Dendritic cell treated with granulocyte-macrophage colony-stimulating factor and Interleukin-4, amounts not matched to agents 40 ng/mL and 50 ng/mL, for 4 days (primary cell): ENCODE measurements at regions of chr4 and their contacts with region 1.

Region 1: GRCh38 chr4:145609481-145610427 is 9.4 kb upstream of the MMAA start:
- H3K4me3 Mint-ChIP-seq: no peak overlapping the region
- H3K27ac Mint-ChIP-seq: no peak overlapping the region
- H3K4me1 Mint-ChIP-seq: peaks cover 32% of the 10 kb centered on the region
- H3K27me3 Mint-ChIP-seq: no peaks in the 10 kb centered on the region

Region 2: DNA sequence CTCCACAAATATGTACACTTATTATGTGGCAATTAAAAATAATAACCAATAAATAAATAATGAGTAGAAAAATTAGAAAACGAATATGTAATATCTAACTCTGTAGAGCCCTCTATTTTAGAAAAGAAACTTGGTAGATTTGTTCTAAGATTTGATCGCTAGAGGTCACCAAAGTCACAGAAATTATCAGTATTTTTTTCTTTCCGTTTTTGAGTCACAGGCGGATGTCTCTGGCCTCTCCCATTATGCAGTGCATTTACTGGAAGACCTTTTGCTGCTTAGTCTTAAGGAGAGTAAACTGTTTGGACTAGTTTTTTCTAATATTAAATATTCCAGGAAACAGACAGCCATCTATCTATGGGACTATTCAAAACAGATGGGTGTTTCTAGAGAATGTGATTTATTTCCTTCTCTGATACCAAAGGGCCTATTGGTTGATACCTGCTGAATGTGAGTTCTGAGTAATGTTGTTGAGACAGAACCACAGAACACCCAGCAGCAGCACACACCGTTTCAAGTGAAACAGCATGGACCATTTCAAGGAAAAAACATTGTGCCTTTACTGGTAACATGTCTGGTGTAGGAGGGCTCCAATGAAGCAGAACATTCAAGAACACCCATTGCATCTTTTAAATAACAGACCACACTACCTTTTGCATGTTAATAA is 1435.2 kb before region 1 on chr4:
- intact Hi-C with region 1: loop called (anchors 5 kb)
- H3K4me3 Mint-ChIP-seq: no peak overlapping the region
- H3K27ac Mint-ChIP-seq: no peak overlapping the region
- H3K4me1 Mint-ChIP-seq: no peaks in the 10 kb centered on the region
- H3K27me3 Mint-ChIP-seq: no peaks in the 10 kb centered on the region

Region 3: DNA sequence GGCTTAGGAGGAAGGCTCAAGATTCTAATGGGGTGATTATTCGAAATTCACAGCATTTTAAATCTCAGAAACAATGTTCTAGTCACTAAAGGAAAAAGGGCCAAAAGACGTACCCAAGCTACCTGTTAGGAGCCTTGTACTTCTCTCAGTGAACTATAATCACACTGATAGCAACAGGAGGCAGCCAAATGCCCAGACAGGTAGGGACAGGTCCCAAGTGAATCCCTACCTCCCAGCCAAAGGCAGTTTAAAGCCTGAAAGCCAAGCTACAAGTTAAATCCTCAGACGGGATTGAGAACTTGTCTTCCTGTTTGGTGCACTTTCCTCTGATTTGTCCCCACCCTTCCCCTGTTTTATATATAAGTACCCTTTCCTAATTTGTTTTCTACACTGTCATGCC is 988.1 kb before region 1 on chr4:
- intact Hi-C with region 1: no loop called
- H3K4me3 Mint-ChIP-seq: no peak overlapping the region
- H3K27ac Mint-ChIP-seq: no peak overlapping the region
- H3K4me1 Mint-ChIP-seq: no peaks in the 10 kb centered on the region
- H3K27me3 Mint-ChIP-seq: no peaks in the 10 kb centered on the region

Region 4: DNA sequence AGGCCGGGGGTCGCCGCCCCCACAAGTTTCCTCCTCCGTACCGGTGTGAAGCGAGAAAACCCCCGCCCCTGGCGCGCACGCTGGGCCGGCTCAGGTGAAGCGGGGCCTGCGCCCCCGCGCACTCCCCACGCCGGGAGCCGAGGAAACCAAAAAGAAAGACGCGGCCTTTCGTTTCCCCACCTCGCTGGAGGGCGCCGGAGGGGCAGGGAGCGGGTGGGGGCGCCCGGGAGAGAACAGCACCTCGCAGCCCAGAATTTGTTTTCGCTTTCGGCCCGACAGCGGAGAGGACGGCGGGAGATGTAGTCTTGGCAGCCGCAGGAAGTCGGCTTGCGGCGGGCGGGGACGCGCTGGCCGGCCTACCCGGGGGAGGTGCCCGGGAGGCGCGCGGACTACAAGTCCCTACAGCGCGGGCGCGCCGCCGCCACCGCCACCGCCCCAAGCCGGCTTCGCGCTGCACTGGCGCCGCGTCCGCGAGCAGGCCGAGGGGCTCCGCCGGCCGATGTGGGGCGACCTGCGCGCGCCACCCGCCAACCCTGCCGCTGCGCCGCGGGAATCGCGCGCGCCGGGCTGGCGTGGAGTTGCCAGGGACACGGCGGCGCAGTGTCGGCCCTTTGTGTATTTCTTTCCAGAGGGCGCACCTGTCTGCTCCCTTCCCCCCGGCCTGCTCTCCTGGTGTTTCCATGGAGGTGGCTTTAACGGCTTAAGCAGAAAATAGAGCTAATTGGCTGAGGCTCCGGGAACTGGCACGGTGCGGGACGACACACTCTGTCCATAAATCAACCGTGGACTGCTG is 429.3 kb before region 1 on chr4 and contains the start of gene OTUD4:
- intact Hi-C with region 1: loop called (anchors 5 kb)
- H3K4me3 Mint-ChIP-seq: peak within 1 kb of the TSS; percentile 80
- H3K27ac Mint-ChIP-seq: peak within 1 kb of the TSS; percentile 89
- H3K4me1 Mint-ChIP-seq: peaks cover 28% of the 10 kb centered on the region
- H3K27me3 Mint-ChIP-seq: peaks cover 13% of the 10 kb centered on the region

Region 5: GRCh38 chr4:145234091-145234706 is 375.6 kb before region 1 on chr4:
- intact Hi-C with region 1: loop called (anchors 1 kb)
- H3K4me3 Mint-ChIP-seq: no peak overlapping the region
- H3K27ac Mint-ChIP-seq: no peak overlapping the region
- H3K4me1 Mint-ChIP-seq: no peaks in the 10 kb centered on the region
- H3K27me3 Mint-ChIP-seq: peaks cover 2% of the 10 kb centered on the region

Region 6: GRCh38 chr4:145333807-145334206 is 275.9 kb before region 1 on chr4:
- intact Hi-C with region 1: no loop called
- H3K4me3 Mint-ChIP-seq: no peak overlapping the region
- H3K27ac Mint-ChIP-seq: no peak overlapping the region
- H3K4me1 Mint-ChIP-seq: no peaks in the 10 kb centered on the region
- H3K27me3 Mint-ChIP-seq: no peaks in the 10 kb centered on the region

Region 7: DNA sequence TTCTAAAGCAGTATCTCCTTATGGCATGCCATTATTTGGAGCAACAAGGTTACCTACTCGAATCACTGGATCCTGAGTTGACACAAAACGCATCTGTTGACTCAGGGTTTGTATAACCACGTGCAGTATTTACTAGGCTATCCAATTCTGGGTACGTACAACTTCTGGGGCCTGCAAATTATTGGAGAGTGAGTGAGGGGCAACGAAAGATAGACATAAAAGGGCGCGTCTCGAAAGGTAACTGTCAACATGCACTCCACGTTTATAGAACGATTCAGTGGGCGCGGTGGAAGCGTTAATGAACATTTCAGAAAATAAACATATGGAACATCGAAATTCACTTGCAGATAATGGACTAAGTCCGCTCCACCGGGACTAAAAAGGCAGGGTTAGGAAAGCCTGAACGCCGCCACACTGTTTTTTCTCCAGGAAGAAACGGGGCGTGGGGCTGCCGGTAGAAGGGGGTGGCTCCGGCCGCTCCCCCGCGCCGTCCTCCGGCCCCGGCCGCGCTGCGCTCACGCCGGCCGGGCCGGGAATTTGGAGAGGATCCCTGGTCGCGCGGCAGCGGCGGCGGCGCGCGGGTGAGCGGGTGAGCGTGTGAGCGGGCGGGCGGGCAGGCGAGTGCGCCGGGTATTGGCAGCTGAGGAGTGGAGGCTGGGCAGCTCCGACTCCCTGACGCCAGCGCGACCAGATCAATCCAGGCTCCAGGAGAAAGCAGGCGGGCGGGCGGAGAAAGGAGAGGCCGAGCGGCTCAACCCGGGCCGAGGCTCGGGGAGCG is 128.4 kb before region 1 on chr4 and contains the start of gene SMAD1:
- intact Hi-C with region 1: loop called (anchors 5 kb)
- H3K4me3 Mint-ChIP-seq: no peak within 1 kb of the TSS
- H3K27ac Mint-ChIP-seq: no peak within 1 kb of the TSS
- H3K4me1 Mint-ChIP-seq: peaks cover 20% of the 10 kb centered on the region
- H3K27me3 Mint-ChIP-seq: no peaks in the 10 kb centered on the region

Region 8: GRCh38 chr4:145557720-145558119 is 52.0 kb before region 1 on chr4:
- intact Hi-C with region 1: loop called (anchors 5 kb)
- H3K4me3 Mint-ChIP-seq: no peak overlapping the region
- H3K27ac Mint-ChIP-seq: no peak overlapping the region
- H3K4me1 Mint-ChIP-seq: peaks cover under 1% of the 10 kb centered on the region
- H3K27me3 Mint-ChIP-seq: no peaks in the 10 kb centered on the region